Heart left ventricle (tissue), 16 donors: ENCODE measurements at regions of chr6 and their contacts with region 1.

Region 1: GRCh38 chr6:116298973-116299372 is 19.2 kb upstream of the TSPYL1 start:
- DNase-seq: no peak
- ATAC-seq: no peak
- H3K4me3 ChIP-seq: no peak overlapping the region
- H3K27ac ChIP-seq: no peak overlapping the region
- H3K4me1 ChIP-seq: peaks cover 0 to 26% (median 0%) of the 10 kb centered on the region in 12 donors
- H3K27me3 ChIP-seq: no peaks in the 10 kb centered on the region
- CTCF ChIP-seq: no peak
- POLR2A ChIP-seq: no peak

Region 2: DNA sequence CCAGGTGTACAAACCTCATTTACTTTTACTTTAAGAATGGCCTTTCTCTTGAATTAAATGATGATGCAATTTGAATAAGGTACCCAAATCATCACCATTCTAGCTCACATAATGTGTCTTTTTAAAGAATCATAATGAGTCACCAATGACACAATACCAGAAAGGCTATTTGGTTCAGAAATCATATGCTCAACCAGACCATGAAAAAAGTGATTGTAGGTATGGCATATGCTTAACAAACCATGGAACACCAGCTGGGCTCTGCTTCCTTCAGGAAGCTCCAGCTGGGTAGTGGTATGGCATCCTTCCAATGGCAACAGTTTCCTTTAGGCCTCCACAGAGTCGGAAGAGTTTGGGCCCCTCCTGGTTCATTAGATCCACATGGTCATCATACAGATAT is 366.5 kb before region 1 on chr6:
- intact Hi-C with region 1: no loop called
- DNase-seq: no peak
- ATAC-seq: no peak
- H3K4me3 ChIP-seq: no peak overlapping the region
- H3K27ac ChIP-seq: no peak overlapping the region
- H3K4me1 ChIP-seq: peaks cover 0 to 7% (median 0%) of the 10 kb centered on the region in 12 donors
- H3K27me3 ChIP-seq: no peaks in the 10 kb centered on the region
- CTCF ChIP-seq: no peak
- POLR2A ChIP-seq: no peak

Region 3: DNA sequence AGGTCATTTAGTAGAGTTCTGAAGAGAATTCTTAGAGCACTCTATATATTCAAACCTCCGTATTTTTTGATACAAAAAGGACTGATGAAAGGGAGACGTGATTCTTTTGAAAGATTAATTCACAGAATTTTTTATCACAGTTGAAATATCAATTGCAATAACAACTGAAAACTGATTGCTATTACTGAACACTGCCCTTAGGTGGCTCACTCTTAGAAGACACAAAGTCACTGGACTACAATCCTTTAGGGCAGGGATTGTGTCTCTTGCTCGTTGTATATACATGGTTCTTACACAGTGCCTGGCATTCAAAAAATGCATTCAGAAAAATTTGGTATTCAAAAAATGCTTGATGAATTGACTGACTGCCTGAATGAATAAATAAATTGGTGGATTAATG is 145.1 kb after region 1 on chr6:
- intact Hi-C with region 1: loop called in 3 of 10 experiments (anchors 10 kb)
- DNase-seq: no peak
- ATAC-seq: peak in 3 of 4 donors; percentile 53 to 61 (median 59)
- H3K4me3 ChIP-seq: no peak overlapping the region
- H3K27ac ChIP-seq: no peak overlapping the region
- H3K4me1 ChIP-seq: peaks cover 0 to 43% (median 0%) of the 10 kb centered on the region in 12 donors
- H3K27me3 ChIP-seq: no peaks in the 10 kb centered on the region
- CTCF ChIP-seq: peak; percentile 8 to 62 (median 41)
- POLR2A ChIP-seq: no peak

Region 4: DNA sequence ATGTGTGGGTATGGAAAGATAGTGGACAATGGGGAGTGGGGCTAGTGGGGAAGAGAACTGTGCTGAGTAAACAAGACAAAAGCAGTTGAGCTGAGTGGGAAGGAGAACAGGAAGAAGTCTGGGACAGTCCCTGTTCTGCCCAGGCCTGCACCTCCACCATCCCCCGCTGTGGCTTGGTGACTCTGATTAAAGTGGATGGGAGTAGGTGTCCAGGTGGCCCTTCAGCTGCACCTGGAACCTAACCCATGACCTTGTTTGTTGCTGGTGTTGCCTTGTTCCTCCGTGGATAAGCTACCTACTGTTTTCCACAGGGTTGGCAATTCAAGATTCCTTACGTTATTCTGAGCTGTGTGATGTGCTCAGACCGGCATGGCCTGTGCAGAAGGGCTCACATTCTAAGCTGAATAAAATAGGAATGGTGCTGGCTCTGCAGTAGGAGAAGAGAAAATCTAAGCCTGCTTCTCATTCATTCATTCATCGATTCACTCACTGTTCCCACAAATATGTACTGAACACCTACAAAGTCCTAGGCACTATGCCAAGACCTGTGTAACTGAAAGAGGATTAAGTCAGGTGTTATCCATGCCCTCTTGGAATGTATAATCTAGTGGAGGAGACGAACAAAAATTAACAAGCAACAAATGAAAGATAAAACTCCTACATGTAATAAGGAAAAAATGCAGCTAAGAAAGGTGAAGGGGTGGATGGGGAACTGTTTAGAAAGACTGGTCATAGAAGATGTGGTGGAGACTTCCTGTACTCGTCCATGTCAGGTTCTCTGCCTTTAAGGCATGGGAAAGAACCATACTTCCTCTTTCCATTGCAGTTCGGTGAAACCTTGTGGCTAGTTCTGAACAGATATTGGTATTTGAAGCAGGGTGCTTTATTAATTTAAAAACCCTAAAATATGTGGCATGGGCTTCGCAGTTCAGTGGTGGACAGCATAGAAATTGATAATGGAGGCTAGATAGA is 152.1 kb after region 1 on chr6:
- intact Hi-C with region 1: loop called in 4 of 10 experiments (anchors 10 kb)
- DNase-seq: no peak
- ATAC-seq: peak in 1 of 4 donors; percentile 61
- H3K4me3 ChIP-seq: no peak overlapping the region
- H3K27ac ChIP-seq: peak overlapping the region in 1 of 12 donors; percentile 28
- H3K4me1 ChIP-seq: peaks cover 0 to 59% (median 0%) of the 10 kb centered on the region in 12 donors
- H3K27me3 ChIP-seq: no peaks in the 10 kb centered on the region
- CTCF ChIP-seq: no peak
- POLR2A ChIP-seq: no peak